ENCODE measurements at regions of chr9 and their contacts with region 1.

Region 1: GRCh38 chr9:22446950-22447617 is 460 bp downstream of the DMRTA1 start:
- DNase-seq: peak; percentile 30 to 53
- ATAC-seq: peak; percentile 84 to 87
- H3K4me3 ChIP-seq: peak overlapping the region; percentile 70 to 89 (median 78)
- H3K27ac ChIP-seq: peak overlapping the region; percentile 75 to 87 (median 83)
- H3K4me1 ChIP-seq: peaks cover 11 to 14% of the 10 kb centered on the region in 2 donors
- H3K27me3 ChIP-seq: no peaks in the 10 kb centered on the region
- CTCF ChIP-seq: peak in 2 of 5 experiments; percentile 21 to 24
- POLR2A ChIP-seq: no peak

Region 2: GRCh38 chr9:22158927-22159346 is 288.1 kb before region 1 on chr9:
- in situ Hi-C with region 1: no loop called
- intact Hi-C with region 1: no loop called
- DNase-seq: peak; percentile 33 to 41
- ATAC-seq: peak; percentile 68 to 74
- H3K4me3 ChIP-seq: no peak overlapping the region
- H3K27ac ChIP-seq: no peak overlapping the region
- H3K4me1 ChIP-seq: peaks cover 0 to 8% of the 10 kb centered on the region in 2 donors
- H3K27me3 ChIP-seq: no peaks in the 10 kb centered on the region
- CTCF ChIP-seq: no peak
- POLR2A ChIP-seq: no peak

Region 3: DNA sequence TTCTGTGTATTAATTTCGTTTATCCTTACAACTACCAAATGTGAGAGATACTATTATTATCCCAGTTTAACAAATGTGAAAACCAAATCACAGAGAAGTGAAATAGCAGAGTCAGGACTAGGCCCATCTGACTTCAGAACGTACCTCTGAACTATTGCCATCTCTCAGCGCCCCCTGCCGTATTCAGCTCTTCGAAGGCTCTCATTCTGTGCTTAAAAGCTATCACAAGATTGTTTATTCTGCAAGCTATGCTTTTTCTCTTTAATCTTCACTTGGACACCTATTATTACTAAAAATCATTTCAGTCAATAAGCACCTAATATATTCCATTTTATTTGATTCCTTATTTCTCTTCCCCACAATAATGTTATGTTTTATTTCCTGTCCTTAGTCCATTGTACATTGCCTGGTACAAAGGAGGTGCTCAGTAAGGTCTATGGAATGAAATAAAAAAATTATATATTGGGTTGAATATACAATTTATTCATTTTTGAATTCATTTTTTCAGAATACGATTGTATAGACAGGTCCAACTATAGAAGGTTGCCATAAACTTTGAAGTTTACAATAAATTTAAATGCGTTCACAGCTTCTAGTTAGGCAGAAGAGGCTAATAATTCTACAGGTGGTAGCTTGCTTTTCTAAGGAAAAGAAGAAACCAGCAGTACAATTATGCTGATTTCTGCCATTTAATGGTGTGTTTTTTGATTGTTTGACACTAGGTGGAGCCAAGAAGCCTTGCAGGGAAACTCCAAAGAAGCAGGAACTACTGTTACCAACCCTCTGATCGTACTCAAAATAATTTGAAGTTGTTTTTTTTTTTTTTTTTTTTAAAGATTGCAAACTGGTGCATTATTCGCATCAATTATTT is 202.7 kb before region 1 on chr9:
- in situ Hi-C with region 1: no loop called
- intact Hi-C with region 1: loop called (anchors 2 kb)
- DNase-seq: no peak
- ATAC-seq: peak in 1 of 2 donors; percentile 46
- H3K4me3 ChIP-seq: no peak overlapping the region
- H3K27ac ChIP-seq: no peak overlapping the region
- H3K4me1 ChIP-seq: no peaks in the 10 kb centered on the region
- H3K27me3 ChIP-seq: no peaks in the 10 kb centered on the region
- CTCF ChIP-seq: peak in 1 of 5 experiments; percentile 35
- POLR2A ChIP-seq: no peak

Region 4: DNA sequence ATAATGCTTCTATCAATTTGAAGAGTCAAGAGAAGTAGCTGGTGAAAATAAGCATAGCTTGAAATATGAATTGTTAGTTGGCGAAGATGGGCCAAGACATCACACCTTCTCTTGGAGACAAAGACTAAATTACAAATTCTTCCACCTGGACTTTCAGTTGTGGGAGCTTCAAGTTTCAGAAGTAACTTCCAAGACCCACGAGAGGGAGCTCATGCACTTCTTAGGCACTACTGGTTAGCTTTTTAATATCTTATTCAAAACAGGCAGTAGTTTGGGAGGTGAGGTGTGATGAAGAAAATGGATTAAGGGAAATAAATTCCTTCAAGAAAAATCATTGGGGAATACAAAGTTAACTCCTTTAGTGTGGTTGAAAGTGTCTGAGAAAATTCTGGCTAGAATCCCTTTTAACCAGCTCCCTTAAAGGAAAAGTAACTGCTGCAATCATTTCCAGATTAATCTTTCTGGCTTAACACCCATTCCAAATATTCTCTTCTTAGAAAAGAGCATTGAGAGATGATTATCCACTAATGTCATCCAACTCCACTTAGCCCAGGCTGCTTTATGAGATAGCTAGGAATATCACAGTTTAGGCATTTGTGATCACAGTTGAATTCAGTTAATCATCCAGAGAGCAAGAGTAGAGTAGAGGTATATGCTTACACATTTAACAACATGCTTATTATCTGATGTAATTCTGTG is 139.9 kb before region 1 on chr9:
- in situ Hi-C with region 1: loop called in 2 of 4 experiments (anchors 10 kb)
- intact Hi-C with region 1: loop called (anchors 1 kb)
- DNase-seq: peak in 1 of 2 donors; percentile 3
- ATAC-seq: peak in 1 of 2 donors; percentile 62
- H3K4me3 ChIP-seq: no peak overlapping the region
- H3K27ac ChIP-seq: no peak overlapping the region
- H3K4me1 ChIP-seq: no peaks in the 10 kb centered on the region
- H3K27me3 ChIP-seq: no peaks in the 10 kb centered on the region
- CTCF ChIP-seq: peak in 4 of 5 experiments; percentile 18 to 62 (median 46)
- POLR2A ChIP-seq: no peak

Region 5: GRCh38 chr9:22512495-22512894 is 65.4 kb after region 1 on chr9:
- in situ Hi-C with region 1: no loop called
- intact Hi-C with region 1: no loop called
- DNase-seq: no peak
- ATAC-seq: no peak
- H3K4me3 ChIP-seq: no peak overlapping the region
- H3K27ac ChIP-seq: no peak overlapping the region
- H3K4me1 ChIP-seq: no peaks in the 10 kb centered on the region
- H3K27me3 ChIP-seq: no peaks in the 10 kb centered on the region
- CTCF ChIP-seq: no peak
- POLR2A ChIP-seq: no peak

Measured in gastrocnemius medialis (tissue), 4 donors.